ENCODE measurements at regions of chr6 and their contacts with region 1.

Region 1: GRCh38 chr6:42914546-42914945 is 1.3 kb upstream of the PTCRA start:
- DNase-seq: no peak
- ATAC-seq: no peak
- H3K4me3 ChIP-seq: no peak overlapping the region
- H3K27ac ChIP-seq: no peak overlapping the region
- H3K4me1 ChIP-seq: no peaks in the 10 kb centered on the region
- H3K27me3 ChIP-seq: no peaks in the 10 kb centered on the region
- CTCF ChIP-seq: no peak

Region 2: GRCh38 chr6:42745707-42746462 is 168.7 kb before region 1 on chr6 and contains the start of gene TBCC:
- CTCF ChIA-PET with region 1: no interaction called
- POLR2A ChIA-PET with region 1: no interaction called
- intact Hi-C with region 1: no loop called
- DNase-seq: peak; percentile 97
- ATAC-seq: peak; percentile 66
- H3K4me3 ChIP-seq: peak within 1 kb of the TSS; percentile 98
- H3K27ac ChIP-seq: peak within 1 kb of the TSS; percentile 80
- H3K4me1 ChIP-seq: peaks cover 21% of the 10 kb centered on the region
- H3K27me3 ChIP-seq: no peaks in the 10 kb centered on the region
- CTCF ChIP-seq: no peak
- total RNA-seq, gene TBCC: 32.3 and 36.5 TPM in 2 replicates

Region 3: GRCh38 chr6:42940493-42941045 is 26.0 kb after region 1 on chr6:
- CTCF ChIA-PET with region 1: interaction called, 11 read pairs
- POLR2A ChIA-PET with region 1: no interaction called
- intact Hi-C with region 1: no loop called
- DNase-seq: no peak
- ATAC-seq: no peak
- H3K4me3 ChIP-seq: no peak overlapping the region
- H3K27ac ChIP-seq: no peak overlapping the region
- H3K4me1 ChIP-seq: no peaks in the 10 kb centered on the region; the same call in 1 of the 2 replicates
- H3K27me3 ChIP-seq: no peaks in the 10 kb centered on the region
- CTCF ChIP-seq: no peak

Region 4: GRCh38 chr6:42960243-42961019 is 45.9 kb after region 1 on chr6 and contains the start of gene GNMT:
- CTCF ChIA-PET with region 1: no interaction called
- POLR2A ChIA-PET with region 1: no interaction called
- intact Hi-C with region 1: no loop called
- DNase-seq: peak; percentile 74
- ATAC-seq: peak; percentile 85
- H3K4me3 ChIP-seq: peak within 1 kb of the TSS; percentile 79
- H3K27ac ChIP-seq: no peak within 1 kb of the TSS
- H3K4me1 ChIP-seq: peaks cover 15% of the 10 kb centered on the region; the same call in 1 of the 2 replicates
- H3K27me3 ChIP-seq: no peaks in the 10 kb centered on the region
- CTCF ChIP-seq: no peak
- total RNA-seq, gene GNMT: 0.47 and 1.2 TPM in 2 replicates